Sigmoid colon (tissue), 7 donors: ENCODE measurements at regions of chr10 and their contacts with region 1.

Region 1: GRCh38 chr10:62816331-62817120 is at the start of gene EGR2:
- DNase-seq: peak; percentile 97
- H3K4me3 ChIP-seq: peak within 1 kb of the TSS; percentile 64 to 88 (median 78)
- H3K27ac ChIP-seq: peak within 1 kb of the TSS; percentile 79 to 95 (median 88)
- H3K4me1 ChIP-seq: peaks cover 0 to 41% (median 38%) of the 10 kb centered on the region in 4 donors
- H3K27me3 ChIP-seq: peaks cover 13 to 51% (median 24%) of the 10 kb centered on the region in 3 donors
- CTCF ChIP-seq: no peak
- EP300 ChIP-seq: no peak
- POLR2A ChIP-seq: no peak
- total RNA-seq, gene EGR2: 1.7 to 3.4 (median 1.8) TPM

Region 2: GRCh38 chr10:62437696-62438095 is 378.8 kb before region 1 on chr10:
- intact Hi-C with region 1: loop called (anchors 2 kb)
- DNase-seq: no peak
- H3K4me3 ChIP-seq: no peak overlapping the region
- H3K27ac ChIP-seq: peak overlapping the region in 1 of 4 donors; percentile 42
- H3K4me1 ChIP-seq: peaks cover 0 to 31% (median 21%) of the 10 kb centered on the region in 4 donors
- H3K27me3 ChIP-seq: no peaks in the 10 kb centered on the region
- CTCF ChIP-seq: peak; percentile 43 to 85 (median 66)
- EP300 ChIP-seq: peak in 1 of 4 donors; percentile 11
- POLR2A ChIP-seq: no peak

Region 3: GRCh38 chr10:62594093-62594520 is 222.4 kb before region 1 on chr10:
- intact Hi-C with region 1: loop called (anchors 5 kb)
- DNase-seq: no peak
- H3K4me3 ChIP-seq: no peak overlapping the region
- H3K27ac ChIP-seq: no peak overlapping the region
- H3K4me1 ChIP-seq: no peaks in the 10 kb centered on the region
- H3K27me3 ChIP-seq: no peaks in the 10 kb centered on the region
- CTCF ChIP-seq: peak; percentile 68 to 89 (median 86)
- EP300 ChIP-seq: no peak
- POLR2A ChIP-seq: no peak

Region 4: GRCh38 chr10:63027531-63027930 is 211.0 kb after region 1 on chr10:
- intact Hi-C with region 1: no loop called
- DNase-seq: no peak
- H3K4me3 ChIP-seq: no peak overlapping the region
- H3K27ac ChIP-seq: no peak overlapping the region
- H3K4me1 ChIP-seq: no peaks in the 10 kb centered on the region
- H3K27me3 ChIP-seq: no peaks in the 10 kb centered on the region
- CTCF ChIP-seq: no peak
- EP300 ChIP-seq: no peak
- POLR2A ChIP-seq: no peak